CD8-positive, alpha-beta T cell (primary cell): ENCODE measurements at regions of chr2 and their contacts with region 1.

Region 1: GRCh38 chr2:96265840-96266679 is at the starts of genes CIAO1 and TMEM127:
- DNase-seq: peak; percentile 96 to 99 (median 97)
- ATAC-seq: peak; percentile 93
- H3K4me3 ChIP-seq: peak within 1 kb of the TSS; percentile 88 to 99
- H3K4me3 Mint-ChIP-seq: peak within 1 kb of the TSS; percentile 89
- H3K27ac ChIP-seq: peak within 1 kb of the TSS; percentile 93 to 97
- H3K27ac Mint-ChIP-seq: peak within 1 kb of the TSS; percentile 86
- H3K4me1 ChIP-seq: peaks cover 39% of the 10 kb centered on the region
- H3K4me1 Mint-ChIP-seq: peaks cover 45% of the 10 kb centered on the region
- H3K27me3 ChIP-seq: no peaks in the 10 kb centered on the region
- H3K27me3 Mint-ChIP-seq: no peaks in the 10 kb centered on the region
- CTCF ChIP-seq: no peak
- total RNA-seq, gene CIAO1: 51.9 to 58.0 TPM
- total RNA-seq, gene TMEM127: 44.7 to 49.6 TPM

Region 2: GRCh38 chr2:96138179-96139145 is 127.6 kb before region 1 on chr2 and contains the start of gene ASTL:
- CTCF ChIA-PET with region 1: interaction called, 17 read pairs
- POLR2A ChIA-PET with region 1: no interaction called
- intact Hi-C with region 1: loop called (anchors 1 to 2 kb)
- DNase-seq: peak; percentile 50 to 86 (median 73)
- ATAC-seq: peak; percentile 30
- H3K4me3 ChIP-seq: no peak within 1 kb of the TSS
- H3K4me3 Mint-ChIP-seq: no peak within 1 kb of the TSS
- H3K27ac ChIP-seq: peak within 1 kb of the TSS in 1 of 2 experiments; percentile 59
- H3K27ac Mint-ChIP-seq: peak within 1 kb of the TSS; percentile 63
- H3K4me1 ChIP-seq: peaks cover 23% of the 10 kb centered on the region
- H3K4me1 Mint-ChIP-seq: peaks cover 31% of the 10 kb centered on the region
- H3K27me3 ChIP-seq: no peaks in the 10 kb centered on the region
- H3K27me3 Mint-ChIP-seq: no peaks in the 10 kb centered on the region
- CTCF ChIP-seq: peak; percentile 52
- total RNA-seq, gene ASTL: 16.6 to 17.5 TPM

Region 3: DNA sequence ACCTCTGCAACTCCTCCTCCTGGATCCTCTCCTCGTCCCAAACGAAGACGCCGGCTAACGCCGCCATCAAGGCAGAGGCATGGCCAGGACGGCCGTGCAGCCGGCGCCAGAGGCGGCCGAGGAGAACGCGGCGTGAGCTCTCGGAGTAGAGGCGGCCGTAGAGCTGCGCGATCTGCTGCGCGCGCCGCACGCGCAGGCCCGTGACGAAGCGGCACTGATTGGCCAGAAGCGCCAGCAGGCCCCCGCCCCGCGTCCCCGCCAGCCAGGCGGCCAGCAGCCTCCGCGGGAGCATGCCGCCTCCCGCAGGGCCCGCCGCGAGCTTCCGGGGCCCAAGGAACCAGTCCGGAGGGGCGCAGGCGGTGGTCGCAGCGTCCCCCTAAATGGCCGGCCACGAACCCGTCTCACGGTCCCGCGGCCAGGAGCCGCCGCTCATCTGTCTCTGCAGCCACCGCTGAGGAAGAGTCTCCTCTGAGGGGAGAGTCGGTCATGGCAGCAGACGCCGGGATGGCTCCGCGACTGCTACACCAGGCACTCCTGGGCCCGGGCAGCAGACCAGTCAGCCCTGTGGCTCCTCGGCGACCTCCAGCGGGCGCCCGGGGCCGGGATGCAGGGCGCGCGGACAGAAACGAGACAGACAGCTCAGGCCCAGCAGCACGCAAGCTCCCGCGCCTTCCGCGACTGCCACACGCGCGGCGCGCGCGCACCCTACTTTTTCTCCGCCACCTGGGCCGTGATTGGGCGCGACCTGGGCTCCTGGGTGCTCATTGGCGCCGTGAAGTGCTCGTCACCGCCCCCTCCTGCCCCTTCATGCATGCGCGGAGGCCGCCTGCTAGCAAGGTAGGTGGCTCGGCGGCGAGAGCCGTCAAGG is 57.7 kb before region 1 on chr2 and contains the start of gene STARD7:
- CTCF ChIA-PET with region 1: no interaction called
- POLR2A ChIA-PET with region 1: interaction called, 13 read pairs
- intact Hi-C with region 1: loop called (anchors 1 kb)
- DNase-seq: peak; percentile 89 to 98 (median 96)
- ATAC-seq: peak; percentile 85
- H3K4me3 ChIP-seq: peak within 1 kb of the TSS; percentile 91
- H3K4me3 Mint-ChIP-seq: peak within 1 kb of the TSS; percentile 100
- H3K27ac ChIP-seq: peak within 1 kb of the TSS; percentile 75
- H3K27ac Mint-ChIP-seq: peak within 1 kb of the TSS; percentile 99
- H3K4me1 ChIP-seq: peaks cover 52% of the 10 kb centered on the region
- H3K4me1 Mint-ChIP-seq: peaks cover 54% of the 10 kb centered on the region
- H3K27me3 ChIP-seq: no peaks in the 10 kb centered on the region
- H3K27me3 Mint-ChIP-seq: no peaks in the 10 kb centered on the region
- CTCF ChIP-seq: no peak
- total RNA-seq, gene STARD7: 75.3 to 85.1 TPM

Region 4: GRCh38 chr2:96320728-96321622 is 54.9 kb after region 1 on chr2:
- CTCF ChIA-PET with region 1: no interaction called
- POLR2A ChIA-PET with region 1: no interaction called
- intact Hi-C with region 1: loop called in 1 of 2 experiments (anchors 1 kb)
- DNase-seq: peak in 2 of 9 experiments; percentile 26 to 38
- ATAC-seq: no peak
- H3K4me3 ChIP-seq: peak overlapping the region; percentile 81 to 85
- H3K4me3 Mint-ChIP-seq: peak overlapping the region; percentile 92
- H3K27ac ChIP-seq: peak overlapping the region; percentile 38 to 71
- H3K27ac Mint-ChIP-seq: peak overlapping the region; percentile 90
- H3K4me1 ChIP-seq: peaks cover 28% of the 10 kb centered on the region
- H3K4me1 Mint-ChIP-seq: peaks cover 55% of the 10 kb centered on the region
- H3K27me3 ChIP-seq: no peaks in the 10 kb centered on the region
- H3K27me3 Mint-ChIP-seq: no peaks in the 10 kb centered on the region
- CTCF ChIP-seq: no peak

Region 5: GRCh38 chr2:96638144-96639121 is 372.4 kb after region 1 on chr2 and contains the start of gene KANSL3:
- CTCF ChIA-PET with region 1: no interaction called
- POLR2A ChIA-PET with region 1: no interaction called
- intact Hi-C with region 1: loop called in 1 of 2 experiments (anchors 5 kb)
- DNase-seq: peak; percentile 79 to 95 (median 88)
- ATAC-seq: peak; percentile 85
- H3K4me3 ChIP-seq: peak within 1 kb of the TSS; percentile 71 to 95
- H3K4me3 Mint-ChIP-seq: peak within 1 kb of the TSS; percentile 93
- H3K27ac ChIP-seq: peak within 1 kb of the TSS; percentile 83 to 91
- H3K27ac Mint-ChIP-seq: peak within 1 kb of the TSS; percentile 96
- H3K4me1 ChIP-seq: peaks cover 24% of the 10 kb centered on the region
- H3K4me1 Mint-ChIP-seq: peaks cover 32% of the 10 kb centered on the region
- H3K27me3 ChIP-seq: no peaks in the 10 kb centered on the region
- H3K27me3 Mint-ChIP-seq: peaks cover 2% of the 10 kb centered on the region
- CTCF ChIP-seq: no peak
- total RNA-seq, gene KANSL3: 58.8 to 60.4 TPM

Region 6: DNA sequence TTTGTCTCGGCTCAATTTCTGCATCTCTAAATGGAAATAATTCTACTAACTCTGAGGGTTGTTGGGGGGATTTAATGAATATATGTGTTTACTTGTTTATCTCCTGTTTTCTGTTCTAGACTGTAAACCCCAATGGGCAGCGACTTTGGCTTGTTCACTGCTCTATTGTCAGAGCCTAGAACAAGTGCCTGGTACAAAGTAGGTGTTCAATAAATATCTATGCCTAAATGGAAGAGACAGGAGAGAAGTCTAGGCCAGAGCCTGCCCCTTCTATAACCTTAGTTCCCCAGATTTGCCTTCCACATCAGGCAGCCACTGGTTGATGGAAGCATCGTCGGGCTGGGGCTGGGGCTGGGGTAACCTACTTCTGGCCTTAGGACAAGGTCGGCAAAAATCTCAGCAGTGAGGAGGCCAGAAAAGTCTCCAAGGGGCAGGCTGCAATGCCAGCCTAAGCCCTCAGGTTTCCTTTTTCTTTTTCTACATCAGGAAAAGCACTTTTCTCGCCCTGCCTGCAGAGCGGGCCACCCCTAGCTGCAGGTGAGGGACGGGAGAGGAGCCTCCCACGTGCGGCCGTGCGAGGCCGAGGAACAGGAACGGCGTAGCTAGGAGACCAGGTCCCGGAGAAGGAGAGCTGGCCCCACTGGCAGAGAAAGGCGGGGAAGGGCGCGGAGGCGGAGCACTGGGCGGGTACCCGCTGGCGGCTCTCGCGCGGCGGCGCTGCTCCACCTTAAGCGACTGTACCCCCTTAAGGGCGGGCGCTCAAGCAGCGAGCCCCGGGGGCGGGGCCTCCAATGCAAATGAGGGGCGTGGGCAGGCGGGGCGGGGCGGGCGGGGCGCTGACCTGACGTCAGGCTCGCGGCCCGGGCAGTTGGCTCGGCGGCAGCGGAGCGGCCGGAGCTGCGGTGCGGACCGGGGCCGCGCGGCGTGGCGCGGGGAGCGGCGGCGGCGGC is 494.3 kb after region 1 on chr2 and contains the start of gene CNNM4:
- CTCF ChIA-PET with region 1: no interaction called
- POLR2A ChIA-PET with region 1: no interaction called
- intact Hi-C with region 1: loop called (anchors 1 to 5 kb)
- DNase-seq: peak; percentile 79 to 95 (median 92)
- ATAC-seq: peak; percentile 94
- H3K4me3 ChIP-seq: peak within 1 kb of the TSS; percentile 67 to 95
- H3K4me3 Mint-ChIP-seq: peak within 1 kb of the TSS; percentile 87
- H3K27ac ChIP-seq: peak within 1 kb of the TSS; percentile 60 to 73
- H3K27ac Mint-ChIP-seq: peak within 1 kb of the TSS; percentile 92
- H3K4me1 ChIP-seq: peaks cover 50% of the 10 kb centered on the region
- H3K4me1 Mint-ChIP-seq: peaks cover 54% of the 10 kb centered on the region
- H3K27me3 ChIP-seq: no peaks in the 10 kb centered on the region
- H3K27me3 Mint-ChIP-seq: no peaks in the 10 kb centered on the region
- CTCF ChIP-seq: no peak
- total RNA-seq, gene CNNM4: 6.7 to 8.3 TPM